B cell (primary cell): ENCODE measurements at regions of chr17 and their contacts with region 1.

Region 1: GRCh38 chr17:49180303-49180702 is 30.1 kb downstream of the GNGT2 start:
- DNase-seq: peak; percentile 77
- ATAC-seq: peak; percentile 53
- H3K4me3 ChIP-seq: no peak overlapping the region
- H3K4me3 Mint-ChIP-seq: no peak overlapping the region
- H3K27ac ChIP-seq: no peak overlapping the region
- H3K27ac Mint-ChIP-seq: no peak overlapping the region
- H3K4me1 ChIP-seq: peaks cover 0 to 4% of the 10 kb centered on the region in 2 donors
- H3K4me1 Mint-ChIP-seq: peaks cover 2% of the 10 kb centered on the region
- H3K27me3 ChIP-seq: peaks cover 0 to 8% (median 3%) of the 10 kb centered on the region in 4 experiments
- H3K27me3 Mint-ChIP-seq: peaks cover 4% of the 10 kb centered on the region
- CTCF ChIP-seq: peak; percentile 86

Region 2: DNA sequence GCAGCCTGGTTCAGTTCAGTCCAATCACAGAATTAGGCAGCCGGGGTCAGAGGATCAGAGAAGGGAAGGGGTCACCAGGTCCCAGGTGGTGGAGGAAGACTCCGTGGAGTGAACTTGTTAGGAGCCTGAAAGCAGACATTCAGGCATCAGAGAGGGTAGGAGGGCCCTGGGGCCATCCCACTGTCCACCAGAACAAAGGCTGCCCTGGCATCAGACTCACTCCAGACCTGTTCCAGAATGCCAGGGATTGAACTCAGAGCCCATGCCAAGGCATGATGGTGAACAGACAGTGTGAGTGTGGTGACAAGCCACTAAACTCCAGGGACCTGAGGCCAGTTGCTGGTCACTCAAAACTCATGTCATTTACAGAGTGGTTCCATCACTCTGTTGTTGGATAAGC is 10.1 kb before region 1 on chr17:
- CTCF ChIA-PET with region 1: interaction called, 10 read pairs
- POLR2A ChIA-PET with region 1: no interaction called
- intact Hi-C with region 1: no loop called
- DNase-seq: no peak
- ATAC-seq: no peak
- H3K4me3 ChIP-seq: no peak overlapping the region
- H3K4me3 Mint-ChIP-seq: no peak overlapping the region
- H3K27ac ChIP-seq: no peak overlapping the region
- H3K27ac Mint-ChIP-seq: no peak overlapping the region
- H3K4me1 ChIP-seq: no peaks in the 10 kb centered on the region
- H3K4me1 Mint-ChIP-seq: no peaks in the 10 kb centered on the region
- H3K27me3 ChIP-seq: peaks cover 0 to 22% (median 14%) of the 10 kb centered on the region in 4 experiments
- H3K27me3 Mint-ChIP-seq: peaks cover 57% of the 10 kb centered on the region
- CTCF ChIP-seq: no peak

Region 3: DNA sequence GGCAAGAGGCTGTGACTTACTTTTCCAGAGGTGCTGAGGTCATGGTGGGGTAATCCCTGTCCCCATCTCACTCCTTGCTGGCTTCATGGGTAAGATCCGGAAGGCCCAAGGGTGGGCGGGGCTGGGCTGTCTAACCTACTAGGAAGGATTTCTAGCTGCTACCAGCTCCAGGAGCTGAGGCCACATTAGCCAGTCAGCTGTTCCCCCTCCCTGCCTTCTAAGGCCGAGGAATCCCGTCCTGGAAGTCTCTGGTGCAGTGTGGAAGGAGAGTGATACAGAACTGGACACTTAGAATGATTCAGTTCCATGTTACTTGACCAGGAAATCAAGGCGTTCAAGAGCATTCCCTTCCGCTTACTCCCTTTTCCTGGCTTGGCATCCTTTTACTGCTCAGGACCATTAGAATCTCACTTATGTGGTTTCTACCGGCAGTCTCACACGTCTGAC is 21.2 kb after region 1 on chr17:
- CTCF ChIA-PET with region 1: interaction called, 12 read pairs
- POLR2A ChIA-PET with region 1: no interaction called
- intact Hi-C with region 1: no loop called
- DNase-seq: no peak
- ATAC-seq: no peak
- H3K4me3 ChIP-seq: no peak overlapping the region
- H3K4me3 Mint-ChIP-seq: no peak overlapping the region
- H3K27ac ChIP-seq: no peak overlapping the region
- H3K27ac Mint-ChIP-seq: no peak overlapping the region
- H3K4me1 ChIP-seq: no peaks in the 10 kb centered on the region
- H3K4me1 Mint-ChIP-seq: no peaks in the 10 kb centered on the region
- H3K27me3 ChIP-seq: no peaks in the 10 kb centered on the region
- H3K27me3 Mint-ChIP-seq: no peaks in the 10 kb centered on the region
- CTCF ChIP-seq: no peak

Region 4: GRCh38 chr17:49210158-49211029 is 30.1 kb after region 1 on chr17 and contains the starts of genes ABI3 and GNGT2:
- CTCF ChIA-PET with region 1: interaction called, 12 read pairs
- POLR2A ChIA-PET with region 1: interaction called, 3 read pairs
- intact Hi-C with region 1: no loop called
- DNase-seq: peak; percentile 86
- ATAC-seq: peak; percentile 92
- H3K4me3 ChIP-seq: peak within 1 kb of the TSS; percentile 31 to 68 (median 60)
- H3K4me3 Mint-ChIP-seq: peak within 1 kb of the TSS; percentile 85
- H3K27ac ChIP-seq: peak within 1 kb of the TSS; percentile 51 to 82
- H3K27ac Mint-ChIP-seq: peak within 1 kb of the TSS; percentile 89
- H3K4me1 ChIP-seq: peaks cover 61 to 71% of the 10 kb centered on the region in 2 donors
- H3K4me1 Mint-ChIP-seq: peaks cover 61% of the 10 kb centered on the region
- H3K27me3 ChIP-seq: no peaks in the 10 kb centered on the region
- H3K27me3 Mint-ChIP-seq: no peaks in the 10 kb centered on the region
- CTCF ChIP-seq: no peak
- total RNA-seq, gene ABI3: 20.7 and 23.3 TPM in 2 replicates
- total RNA-seq, gene GNGT2: 9.3 and 11.1 TPM in 2 replicates

Region 5: GRCh38 chr17:49223517-49224197 is 43.4 kb after region 1 on chr17:
- CTCF ChIA-PET with region 1: interaction called, 332 read pairs
- POLR2A ChIA-PET with region 1: interaction called, 4 read pairs
- intact Hi-C with region 1: loop called (anchors 1 kb)
- DNase-seq: peak; percentile 72
- ATAC-seq: peak; percentile 28
- H3K4me3 ChIP-seq: peak overlapping the region in 4 of 5 experiments; percentile 31 to 56 (median 42)
- H3K4me3 Mint-ChIP-seq: peak overlapping the region; percentile 87
- H3K27ac ChIP-seq: no peak overlapping the region
- H3K27ac Mint-ChIP-seq: peak overlapping the region; percentile 62
- H3K4me1 ChIP-seq: peaks cover 50 to 58% of the 10 kb centered on the region in 2 donors
- H3K4me1 Mint-ChIP-seq: peaks cover 49% of the 10 kb centered on the region
- H3K27me3 ChIP-seq: peaks cover 0 to 16% (median 7%) of the 10 kb centered on the region in 4 experiments
- H3K27me3 Mint-ChIP-seq: peaks cover 4% of the 10 kb centered on the region
- CTCF ChIP-seq: peak; percentile 90

Region 6: DNA sequence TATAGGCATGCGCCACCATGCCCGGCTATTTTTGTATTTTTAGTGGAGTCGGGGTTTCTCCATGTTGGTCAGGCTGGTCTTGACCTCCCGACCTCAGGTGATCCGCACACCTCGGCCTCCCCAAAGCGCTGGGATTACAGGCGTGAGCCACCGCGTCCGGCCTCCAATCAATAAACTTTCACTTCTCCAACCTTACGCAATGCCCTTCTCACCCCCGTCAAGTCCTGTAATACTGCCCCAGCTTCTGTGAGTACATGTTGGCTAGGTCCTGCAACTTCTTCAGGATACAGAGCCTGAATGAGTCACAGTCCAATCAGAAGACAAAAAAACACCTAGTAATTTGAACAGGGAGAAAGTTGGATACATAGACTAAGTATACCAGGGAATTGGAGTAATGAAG is 97.3 kb after region 1 on chr17:
- CTCF ChIA-PET with region 1: interaction called, 14 read pairs
- POLR2A ChIA-PET with region 1: no interaction called
- intact Hi-C with region 1: no loop called
- DNase-seq: no peak
- ATAC-seq: no peak
- H3K4me3 ChIP-seq: no peak overlapping the region
- H3K4me3 Mint-ChIP-seq: no peak overlapping the region
- H3K27ac ChIP-seq: no peak overlapping the region
- H3K27ac Mint-ChIP-seq: no peak overlapping the region
- H3K4me1 ChIP-seq: no peaks in the 10 kb centered on the region
- H3K4me1 Mint-ChIP-seq: no peaks in the 10 kb centered on the region
- H3K27me3 ChIP-seq: no peaks in the 10 kb centered on the region
- H3K27me3 Mint-ChIP-seq: peaks cover 11% of the 10 kb centered on the region
- CTCF ChIP-seq: no peak

Region 7: DNA sequence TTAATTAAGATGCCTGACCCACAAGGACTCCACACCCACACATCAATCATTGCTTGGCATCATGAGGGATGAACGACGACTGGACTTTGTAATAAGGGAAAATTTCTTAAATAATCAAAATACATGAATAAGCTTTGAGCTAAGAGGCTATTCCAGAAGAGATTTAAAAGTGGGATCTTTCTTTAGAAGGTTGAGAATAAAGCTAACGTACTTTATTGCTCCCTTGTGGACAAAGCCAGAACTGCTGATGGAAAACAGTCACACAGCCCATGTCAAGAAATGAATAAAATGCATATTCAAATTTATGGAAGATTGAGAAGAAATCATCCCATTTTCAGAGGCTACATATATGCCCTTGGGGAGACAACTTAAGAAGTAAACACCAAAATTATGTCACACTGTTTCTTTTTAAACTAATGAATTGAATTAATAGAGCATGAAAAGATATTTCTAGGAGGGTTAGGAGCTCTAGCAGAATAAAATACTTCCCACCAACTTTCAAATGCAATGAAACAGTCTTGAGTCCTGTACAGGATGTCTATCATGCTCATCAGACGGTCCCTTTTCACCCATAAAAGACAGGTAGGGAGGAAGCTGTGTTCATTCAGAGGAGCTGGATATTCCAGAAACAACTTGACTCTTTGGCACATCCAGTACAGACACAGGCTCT is 110.5 kb after region 1 on chr17:
- CTCF ChIA-PET with region 1: interaction called, 43 read pairs
- POLR2A ChIA-PET with region 1: no interaction called
- intact Hi-C with region 1: loop called (anchors 1 kb)
- DNase-seq: peak; percentile 39
- ATAC-seq: no peak
- H3K4me3 ChIP-seq: no peak overlapping the region
- H3K4me3 Mint-ChIP-seq: no peak overlapping the region
- H3K27ac ChIP-seq: no peak overlapping the region
- H3K27ac Mint-ChIP-seq: no peak overlapping the region
- H3K4me1 ChIP-seq: no peaks in the 10 kb centered on the region
- H3K4me1 Mint-ChIP-seq: no peaks in the 10 kb centered on the region
- H3K27me3 ChIP-seq: no peaks in the 10 kb centered on the region
- H3K27me3 Mint-ChIP-seq: no peaks in the 10 kb centered on the region
- CTCF ChIP-seq: peak; percentile 81